ENCODE measurements at regions of chr9 and their contacts with region 1.

Region 1: DNA sequence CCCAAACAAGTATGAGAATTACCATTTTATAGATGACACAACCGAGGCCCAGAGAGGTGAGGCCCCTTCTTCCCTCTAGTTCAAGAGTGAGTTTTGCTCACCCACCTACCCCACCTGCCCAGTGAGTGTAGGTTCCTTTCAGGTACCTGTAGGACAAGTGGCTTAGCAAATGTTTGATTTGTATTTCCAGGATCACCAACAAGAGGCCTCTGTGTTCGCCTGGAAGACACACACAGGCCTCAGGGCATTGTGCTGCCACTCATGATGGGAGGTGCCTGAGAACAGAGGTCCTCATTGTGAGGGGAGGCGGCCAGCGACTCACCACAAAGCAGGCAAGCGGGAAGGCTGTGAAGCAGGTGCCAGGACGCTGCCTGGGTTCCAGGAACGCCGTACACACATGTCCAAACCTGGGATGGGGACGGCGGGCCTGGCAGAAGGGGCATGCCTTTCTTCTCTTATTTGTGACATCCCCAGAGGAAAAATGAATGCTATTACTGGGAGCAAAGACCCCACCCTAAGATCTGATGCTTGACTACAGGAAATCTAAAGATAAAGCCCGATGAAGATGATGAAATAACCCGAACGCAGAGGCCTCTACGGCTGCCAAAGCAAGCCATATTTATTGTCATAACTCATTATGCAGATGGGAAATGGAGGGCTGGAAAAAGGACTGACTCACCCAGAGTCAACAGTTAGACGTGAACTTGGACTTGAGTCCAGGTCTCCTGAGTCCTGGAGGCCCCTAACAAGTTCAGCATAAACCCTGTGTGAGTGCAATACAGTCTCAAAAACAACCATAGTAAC is 60.2 kb upstream of the SLC25A51 start:
- DNase-seq: peak; percentile 94
- ATAC-seq: peak; percentile 83
- H3K4me3 ChIP-seq: peak overlapping the region in 1 of 3 experiments; percentile 42; a peak in 2 of 6 replicates
- H3K27ac ChIP-seq: peak overlapping the region; percentile 65
- H3K4me1 ChIP-seq: peaks cover 78% of the 10 kb centered on the region
- H3K27me3 ChIP-seq: no peaks in the 10 kb centered on the region
- CTCF ChIP-seq: peak; percentile 21; the same call in 1 of the 2 replicates
- EP300 ChIP-seq: peak in 1 of 2 experiments; percentile 56; a peak in 2 of 4 replicates
- POLR2A ChIP-seq: no peak
- RAD21 ChIP-seq: no peak

Region 2: GRCh38 chr9:37976714-37977477 is 12.8 kb after region 1 on chr9:
- CTCF ChIA-PET with region 1: no interaction called
- POLR2A ChIA-PET with region 1: no interaction called
- in situ Hi-C with region 1: no loop called
- intact Hi-C with region 1: no loop called
- DNase-seq: no peak
- ATAC-seq: no peak
- H3K4me3 ChIP-seq: no peak overlapping the region
- H3K27ac ChIP-seq: no peak overlapping the region
- H3K4me1 ChIP-seq: peaks cover 12% of the 10 kb centered on the region; the same call in 1 of the 2 replicates
- H3K27me3 ChIP-seq: no peaks in the 10 kb centered on the region
- CTCF ChIP-seq: no peak
- EP300 ChIP-seq: no peak
- POLR2A ChIP-seq: no peak
- RAD21 ChIP-seq: no peak

Region 3: GRCh38 chr9:38008168-38009034 is 44.3 kb after region 1 on chr9:
- CTCF ChIA-PET with region 1: no interaction called
- POLR2A ChIA-PET with region 1: interaction called, 7 read pairs
- in situ Hi-C with region 1: loop called (anchors 5 kb)
- intact Hi-C with region 1: loop called (anchors 5 kb)
- DNase-seq: peak; percentile 76
- ATAC-seq: peak; percentile 94
- H3K4me3 ChIP-seq: peak overlapping the region in 1 of 3 experiments; percentile 15; a peak in 1 of 6 replicates
- H3K27ac ChIP-seq: peak overlapping the region; percentile 69
- H3K4me1 ChIP-seq: peaks cover 51% of the 10 kb centered on the region
- H3K27me3 ChIP-seq: no peaks in the 10 kb centered on the region
- CTCF ChIP-seq: peak; percentile 37; the same call in 1 of the 2 replicates
- EP300 ChIP-seq: peak in 1 of 2 experiments; percentile 14; a peak in 1 of 4 replicates
- POLR2A ChIP-seq: no peak
- RAD21 ChIP-seq: 0 out of 2 replicates have a peak, but pooled peaks have one; percentile 43

Region 4: DNA sequence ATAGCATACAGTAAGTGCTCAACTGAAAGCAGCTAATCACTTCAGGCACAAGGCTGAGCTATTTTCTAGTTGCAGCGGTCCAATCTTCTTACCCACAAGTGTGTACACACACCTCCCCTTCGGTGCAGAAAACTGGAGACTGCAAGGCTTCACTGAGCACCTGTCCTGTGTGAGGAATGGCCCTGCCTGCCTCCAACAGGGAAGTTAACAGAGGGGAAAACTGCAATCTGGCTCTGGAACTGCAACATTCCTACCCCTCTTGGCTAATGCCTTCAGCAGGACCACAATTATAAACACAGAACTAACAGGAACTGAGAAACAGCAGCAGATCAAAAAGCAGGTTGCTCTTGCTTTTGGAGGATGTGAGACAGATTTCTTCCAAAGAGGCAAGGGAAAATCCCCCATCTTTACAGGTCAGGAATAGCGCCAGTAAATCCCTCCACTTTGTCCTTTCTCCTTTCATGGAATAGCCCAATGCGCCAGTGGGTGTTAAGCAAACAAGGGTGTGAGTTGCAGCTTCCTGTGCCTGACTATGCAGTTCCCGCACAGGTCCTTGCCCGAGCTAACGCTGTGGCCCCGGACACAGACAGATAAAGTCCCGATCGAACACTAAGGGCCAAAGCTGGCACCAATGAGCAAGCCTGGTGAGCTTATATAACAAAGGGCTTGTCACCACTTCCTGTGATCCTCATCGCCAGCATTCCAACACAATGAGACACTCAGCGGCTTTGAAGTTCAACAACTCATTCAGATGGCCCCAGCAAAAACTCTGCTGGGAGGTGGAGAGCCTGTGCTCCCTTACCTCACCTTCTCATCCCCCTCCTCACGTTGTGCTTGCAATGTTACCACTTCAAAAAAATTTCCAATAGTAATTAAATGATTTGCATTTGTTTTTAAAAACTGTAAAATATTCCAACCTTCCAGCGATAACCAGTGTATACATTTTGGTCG is 83.4 kb after region 1 on chr9:
- CTCF ChIA-PET with region 1: no interaction called
- POLR2A ChIA-PET with region 1: interaction called, 8 read pairs
- in situ Hi-C with region 1: no loop called
- intact Hi-C with region 1: loop called (anchors 5 kb)
- DNase-seq: peak; percentile 99
- ATAC-seq: peak; percentile 94
- H3K4me3 ChIP-seq: peak overlapping the region; percentile 8 to 54 (median 26); a peak in 5 of 6 replicates
- H3K27ac ChIP-seq: peak overlapping the region; percentile 92
- H3K4me1 ChIP-seq: peaks cover 95% of the 10 kb centered on the region
- H3K27me3 ChIP-seq: no peaks in the 10 kb centered on the region
- CTCF ChIP-seq: peak; percentile 24
- EP300 ChIP-seq: peak; percentile 91
- POLR2A ChIP-seq: peak; percentile 73 to 82
- RAD21 ChIP-seq: peak; percentile 35; the same call in 1 of the 2 replicates

Region 5: DNA sequence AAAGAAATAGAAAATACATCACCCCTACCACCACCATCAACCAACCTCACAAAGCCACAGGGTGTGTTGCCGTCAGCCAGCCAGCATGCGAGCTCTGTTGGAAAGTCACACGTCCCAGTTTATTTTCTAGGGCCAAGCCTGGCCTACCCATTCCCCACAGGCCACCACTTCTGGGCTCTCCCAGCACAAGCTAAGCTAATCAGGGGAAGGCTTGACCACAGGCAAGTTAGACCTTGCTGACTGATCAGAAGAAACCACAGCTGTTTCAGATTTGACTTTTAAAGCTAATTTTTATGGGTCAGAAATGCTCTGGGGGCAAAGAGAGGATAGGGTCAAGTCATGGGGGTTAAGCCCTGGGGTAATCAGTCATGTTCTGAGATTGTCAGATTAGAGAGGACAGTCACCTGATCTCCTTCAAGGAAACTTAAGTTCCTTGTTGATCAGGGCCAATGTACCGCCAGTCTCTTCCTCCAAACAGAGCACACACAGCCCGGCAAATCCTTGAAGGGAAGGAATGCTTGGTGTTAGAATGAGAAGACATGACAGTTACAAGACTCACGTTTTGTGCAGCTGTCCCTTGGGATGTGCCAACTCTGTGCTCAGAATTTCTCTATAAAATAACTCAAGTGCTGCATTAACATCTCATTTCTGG is 97.3 kb after region 1 on chr9:
- CTCF ChIA-PET with region 1: no interaction called
- POLR2A ChIA-PET with region 1: no interaction called
- in situ Hi-C with region 1: loop called (anchors 5 kb)
- intact Hi-C with region 1: loop called (anchors 2 kb)
- DNase-seq: no peak
- ATAC-seq: no peak
- H3K4me3 ChIP-seq: no peak overlapping the region; a peak in 1 of 6 replicates
- H3K27ac ChIP-seq: peak overlapping the region; percentile 83
- H3K4me1 ChIP-seq: peaks cover 99% of the 10 kb centered on the region
- H3K27me3 ChIP-seq: no peaks in the 10 kb centered on the region; a peak in 1 of 5 replicates
- CTCF ChIP-seq: no peak
- EP300 ChIP-seq: no peak
- POLR2A ChIP-seq: no peak
- RAD21 ChIP-seq: no peak

Region 6: GRCh38 chr9:38068866-38069629 is 104.9 kb after region 1 on chr9 and contains the start of gene SHB:
- CTCF ChIA-PET with region 1: no interaction called
- POLR2A ChIA-PET with region 1: interaction called, 3 read pairs
- in situ Hi-C with region 1: loop called (anchors 5 kb)
- intact Hi-C with region 1: no loop called
- DNase-seq: peak; percentile 56
- ATAC-seq: peak; percentile 71
- H3K4me3 ChIP-seq: peak within 1 kb of the TSS; percentile 84 to 96 (median 95)
- H3K27ac ChIP-seq: peak within 1 kb of the TSS; percentile 93
- H3K4me1 ChIP-seq: peaks cover 46% of the 10 kb centered on the region
- H3K27me3 ChIP-seq: no peaks in the 10 kb centered on the region; a peak in 1 of 5 replicates
- CTCF ChIP-seq: no peak
- EP300 ChIP-seq: no peak
- POLR2A ChIP-seq: peak in 1 of 2 experiments; percentile 84; a peak in 2 of 4 replicates
- RAD21 ChIP-seq: peak; percentile 68
- total RNA-seq, gene SHB: 14.7 and 19.4 TPM in 2 replicates

Measured in HepG2 (cell line).